ENCODE measurements at regions of chr1 and their contacts with region 1.

Region 1: GRCh38 chr1:3453203-3453761 is 1.2 kb upstream of the ARHGEF16 start:
- DNase-seq: peak; percentile 68
- ATAC-seq: peak; percentile 65
- H3K4me3 ChIP-seq: peak overlapping the region in 1 of 2 experiments; percentile 46; a peak in 1 of 4 replicates
- H3K27ac ChIP-seq: peak overlapping the region; percentile 80
- H3K4me1 ChIP-seq: peaks cover 14 to 27% of the 10 kb centered on the region in 2 experiments
- H3K27me3 ChIP-seq: no peaks in the 10 kb centered on the region
- CTCF ChIP-seq: peak in 2 of 3 experiments; percentile 93 to 94; a peak in 4 of 6 replicates
- POLR2A ChIP-seq: no peak
- RAD21 ChIP-seq: no peak

Region 2: DNA sequence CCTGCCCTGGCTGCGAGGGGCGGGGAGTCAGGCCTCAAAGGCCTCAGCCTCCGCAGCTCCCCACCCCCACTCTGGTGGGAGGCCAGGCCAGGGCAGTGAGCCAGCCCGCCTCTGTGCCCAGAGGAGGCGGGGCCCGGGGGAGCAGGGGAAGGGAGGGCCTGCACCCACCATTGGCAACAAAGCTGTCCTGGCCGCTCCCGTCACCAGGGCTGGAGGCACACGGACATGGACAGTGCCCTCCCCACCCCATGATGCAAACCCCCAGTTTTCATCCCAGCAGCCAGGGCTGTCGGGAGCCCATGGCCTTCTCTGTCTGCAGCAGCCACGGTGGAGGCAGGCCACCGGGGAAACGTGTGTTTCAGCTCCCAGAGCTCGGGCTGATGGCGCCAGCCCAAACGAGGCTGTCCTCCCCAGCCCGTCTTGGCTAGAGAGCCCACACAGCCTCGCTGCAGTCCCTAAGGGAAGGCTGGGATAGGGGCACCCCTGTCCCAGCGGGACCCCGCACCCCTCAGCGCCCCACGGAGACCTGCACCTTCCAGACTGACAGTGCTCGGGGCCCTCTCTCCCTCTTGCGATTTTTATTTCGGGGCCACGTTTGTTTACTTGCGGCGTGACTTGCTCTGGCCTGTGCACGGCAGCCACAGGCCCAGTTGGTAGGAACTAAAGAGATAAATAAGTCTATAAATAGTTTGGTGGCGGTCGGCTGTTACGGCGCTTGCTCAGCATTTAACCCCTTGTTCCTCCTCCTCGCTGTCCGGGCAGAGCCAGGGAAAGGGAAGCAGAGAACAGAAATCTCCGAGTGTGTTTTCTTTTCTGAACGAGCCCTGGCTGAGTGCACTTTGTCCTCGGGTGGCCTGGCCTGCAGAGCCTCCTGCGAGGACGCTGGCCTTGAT is 282.5 kb before region 1 on chr1:
- CTCF ChIA-PET with region 1: no interaction called
- POLR2A ChIA-PET with region 1: no interaction called
- RAD21 ChIA-PET with region 1: no interaction called
- intact Hi-C with region 1: no loop called
- DNase-seq: no peak
- ATAC-seq: no peak
- H3K4me3 ChIP-seq: no peak overlapping the region
- H3K27ac ChIP-seq: no peak overlapping the region
- H3K4me1 ChIP-seq: no peaks in the 10 kb centered on the region
- H3K27me3 ChIP-seq: no peaks in the 10 kb centered on the region
- CTCF ChIP-seq: no peak
- POLR2A ChIP-seq: no peak
- RAD21 ChIP-seq: no peak

Region 3: DNA sequence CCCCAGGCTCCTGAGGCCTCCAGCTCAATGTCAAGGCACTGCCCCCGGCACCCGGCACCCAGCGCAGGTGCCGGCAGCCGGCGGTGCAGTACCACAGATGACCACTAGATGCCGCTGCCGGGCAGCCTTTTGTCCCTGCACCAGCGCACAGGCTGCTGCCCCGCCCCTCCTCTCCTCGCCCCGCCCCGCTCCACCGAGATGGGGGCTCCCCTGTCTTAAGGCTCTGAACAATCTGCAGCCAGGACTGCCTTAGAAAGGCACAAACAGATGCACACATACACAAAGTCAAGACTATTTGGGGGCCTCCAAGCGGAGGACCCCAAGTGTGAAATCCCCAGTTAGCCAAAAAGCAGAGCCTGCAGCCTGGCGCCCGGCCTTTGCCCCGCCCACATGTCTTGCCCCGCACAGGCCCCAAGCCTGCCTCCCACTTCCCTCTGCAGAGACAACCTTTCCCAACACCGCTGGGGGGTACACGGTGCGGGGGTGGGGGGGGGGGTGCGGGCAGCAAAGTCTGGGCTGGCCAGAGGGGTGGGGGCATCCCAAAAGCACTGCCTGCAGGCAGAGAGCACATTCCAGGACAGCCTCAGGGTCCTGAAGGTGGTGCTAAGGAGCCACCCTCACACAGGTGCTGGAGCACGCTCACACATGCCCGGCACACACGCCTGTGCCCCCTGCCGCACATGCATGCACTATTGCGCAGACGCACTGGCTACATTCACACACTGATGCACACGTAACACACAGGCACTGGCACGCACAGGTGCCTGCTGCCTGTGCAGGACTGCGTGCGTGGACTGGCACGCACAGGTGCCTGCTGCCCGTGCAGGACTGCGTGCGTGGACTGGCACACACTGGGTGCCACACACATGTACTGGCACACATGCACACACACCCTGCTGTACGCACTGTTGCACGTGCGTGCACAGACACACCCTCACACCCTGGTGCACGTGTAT is 38.3 kb after region 1 on chr1:
- CTCF ChIA-PET with region 1: interaction called, 11 read pairs
- POLR2A ChIA-PET with region 1: no interaction called
- RAD21 ChIA-PET with region 1: interaction called, 4 to 8 read pairs
- intact Hi-C with region 1: no loop called
- DNase-seq: peak; percentile 19
- ATAC-seq: peak; percentile 86
- H3K4me3 ChIP-seq: no peak overlapping the region
- H3K27ac ChIP-seq: peak overlapping the region; percentile 22; the same call in 1 of the 2 replicates
- H3K4me1 ChIP-seq: peaks cover 0 to 26% of the 10 kb centered on the region in 2 experiments; a peak in 1 of 4 replicates
- H3K27me3 ChIP-seq: no peaks in the 10 kb centered on the region
- CTCF ChIP-seq: peak; percentile 86 to 97 (median 93)
- POLR2A ChIP-seq: no peak
- RAD21 ChIP-seq: peak; percentile 94

Region 4: GRCh38 chr1:3649342-3650247 is 196.3 kb after region 1 on chr1 and contains the start of gene WRAP73:
- CTCF ChIA-PET with region 1: no interaction called
- POLR2A ChIA-PET with region 1: no interaction called
- RAD21 ChIA-PET with region 1: no interaction called
- intact Hi-C with region 1: no loop called
- DNase-seq: peak; percentile 82
- ATAC-seq: peak; percentile 73
- H3K4me3 ChIP-seq: peak within 1 kb of the TSS; percentile 86 to 98
- H3K27ac ChIP-seq: peak within 1 kb of the TSS; percentile 72
- H3K4me1 ChIP-seq: peaks cover 17 to 29% of the 10 kb centered on the region in 2 experiments
- H3K27me3 ChIP-seq: no peaks in the 10 kb centered on the region
- CTCF ChIP-seq: peak in 1 of 3 experiments; percentile 26; a peak in 2 of 6 replicates
- POLR2A ChIP-seq: peak; percentile 71
- RAD21 ChIP-seq: no peak
- total RNA-seq, gene WRAP73: 51.4 TPM

Region 5: GRCh38 chr1:3721955-3722465 is 268.7 kb after region 1 on chr1:
- CTCF ChIA-PET with region 1: interaction called, 23 read pairs
- POLR2A ChIA-PET with region 1: interaction called, 3 read pairs
- RAD21 ChIA-PET with region 1: interaction called in 1 of 2 experiments, 3 read pairs
- intact Hi-C with region 1: loop called (anchors 5 kb)
- DNase-seq: no peak
- ATAC-seq: no peak
- H3K4me3 ChIP-seq: no peak overlapping the region
- H3K27ac ChIP-seq: no peak overlapping the region
- H3K4me1 ChIP-seq: no peaks in the 10 kb centered on the region
- H3K27me3 ChIP-seq: no peaks in the 10 kb centered on the region
- CTCF ChIP-seq: no peak
- POLR2A ChIP-seq: no peak
- RAD21 ChIP-seq: no peak

Region 6: DNA sequence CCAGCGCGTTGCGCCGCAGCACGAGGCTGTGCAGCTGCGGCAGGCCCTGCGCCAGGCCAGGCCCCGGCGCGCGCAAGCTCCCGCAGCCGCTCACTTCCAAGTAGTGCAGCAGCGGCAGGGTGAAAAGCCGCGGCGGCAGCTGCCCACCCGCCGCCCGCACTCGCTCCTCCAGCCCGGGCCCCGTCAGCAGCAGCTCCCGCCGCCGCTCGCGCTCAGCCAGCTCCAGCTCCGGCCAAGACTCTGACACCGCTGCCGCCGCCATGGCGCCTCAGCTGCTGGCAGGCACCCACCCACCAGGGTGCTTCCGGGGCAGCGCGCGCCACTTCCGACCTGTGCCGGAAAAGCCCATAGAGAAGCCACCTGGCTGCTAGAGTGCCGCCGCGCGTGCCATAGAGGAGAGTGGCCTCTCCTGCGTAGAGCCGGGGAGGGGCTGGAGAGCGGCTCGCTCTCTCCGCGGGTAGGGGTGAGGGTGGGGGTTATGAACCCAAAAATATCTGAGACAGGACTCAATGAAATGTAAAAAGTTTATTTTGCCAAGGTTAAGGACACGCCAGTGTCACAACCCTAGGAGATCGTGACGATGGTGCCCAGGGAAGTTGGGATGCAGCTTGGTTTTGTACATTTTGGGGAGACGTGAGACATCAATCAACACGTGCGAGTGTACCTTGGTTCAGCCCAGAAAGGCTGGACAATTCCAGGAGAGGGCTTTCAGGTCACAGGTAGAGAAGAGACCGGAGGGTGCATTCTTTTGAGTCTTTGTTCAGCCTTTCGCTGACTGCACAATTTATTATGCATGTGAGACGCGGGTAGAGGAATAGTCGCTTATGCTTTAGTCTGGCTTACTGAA is 343.2 kb after region 1 on chr1 and contains the start of gene LRRC47:
- CTCF ChIA-PET with region 1: interaction called, 9 read pairs
- POLR2A ChIA-PET with region 1: no interaction called
- RAD21 ChIA-PET with region 1: no interaction called
- intact Hi-C with region 1: loop called (anchors 5 kb)
- DNase-seq: peak; percentile 77
- ATAC-seq: peak; percentile 98
- H3K4me3 ChIP-seq: peak within 1 kb of the TSS; percentile 80 to 95
- H3K27ac ChIP-seq: peak within 1 kb of the TSS; percentile 61
- H3K4me1 ChIP-seq: peaks cover 14 to 30% of the 10 kb centered on the region in 2 experiments; a peak in 3 of 4 replicates
- H3K27me3 ChIP-seq: no peaks in the 10 kb centered on the region
- CTCF ChIP-seq: no peak
- POLR2A ChIP-seq: peak; percentile 61
- RAD21 ChIP-seq: no peak
- total RNA-seq, gene LRRC47: 48.0 TPM